ENCODE measurements at regions of chr19 and their contacts with region 1.

Region 1: GRCh38 chr19:18007044-18007916 is 690 bp upstream of the ARRDC2 start:
- DNase-seq: peak; percentile 63 to 80
- H3K4me3 ChIP-seq: peak overlapping the region; percentile 29
- H3K27ac ChIP-seq: no peak overlapping the region
- H3K4me1 ChIP-seq: peaks cover 9% of the 10 kb centered on the region; the same call in 1 of the 2 replicates
- H3K27me3 ChIP-seq: no peaks in the 10 kb centered on the region
- CTCF ChIP-seq: peak; percentile 98

Region 2: DNA sequence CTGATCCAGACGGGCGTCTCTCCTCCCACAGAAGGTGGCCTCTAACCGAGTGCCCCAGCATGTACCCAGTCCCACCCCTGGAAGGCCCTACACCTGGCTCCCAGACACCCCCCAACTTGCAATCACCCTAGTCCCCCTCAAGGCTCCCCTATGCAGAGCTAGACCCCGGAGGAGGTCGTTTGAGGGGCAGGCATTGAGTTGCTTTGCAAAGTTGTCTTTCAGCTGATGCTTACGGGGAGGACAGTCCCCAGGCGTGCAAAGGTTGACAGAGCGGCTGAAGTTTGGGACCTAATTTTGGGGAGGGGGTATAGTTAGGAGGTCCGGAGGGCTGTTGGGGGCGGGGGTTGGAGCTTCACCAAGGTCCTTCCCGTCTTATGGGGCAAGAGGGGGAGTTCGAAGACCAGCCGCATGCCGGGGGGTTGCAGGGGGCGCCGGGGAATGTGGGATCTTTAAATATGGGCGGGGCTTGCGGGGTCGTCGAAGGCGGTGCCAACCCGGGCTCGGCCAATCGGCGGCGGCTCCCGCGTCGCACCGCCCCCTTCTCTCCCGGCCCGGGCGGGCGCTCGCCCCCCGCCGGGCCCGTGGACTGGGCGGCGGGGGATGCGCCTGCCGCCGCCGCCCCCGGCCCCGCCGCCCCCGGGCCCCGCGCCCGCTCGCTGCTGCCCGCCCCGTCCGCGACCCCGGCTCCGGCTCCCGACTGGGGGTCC is 40.6 kb before region 1 on chr19 and contains the start of gene KCNN1:
- CTCF ChIA-PET with region 1: no interaction called
- POLR2A ChIA-PET with region 1: no interaction called
- intact Hi-C with region 1: no loop called
- DNase-seq: no peak
- H3K4me3 ChIP-seq: no peak within 1 kb of the TSS
- H3K27ac ChIP-seq: no peak within 1 kb of the TSS
- H3K4me1 ChIP-seq: no peaks in the 10 kb centered on the region
- H3K27me3 ChIP-seq: peaks cover 16% of the 10 kb centered on the region; the same call in 1 of the 2 replicates
- CTCF ChIP-seq: no peak
- total RNA-seq, gene KCNN1: 0.09 TPM in 1 of 2 replicates, not detected in the other

Region 3: GRCh38 chr19:18029617-18030338 is 22.5 kb after region 1 on chr19:
- CTCF ChIA-PET with region 1: no interaction called
- POLR2A ChIA-PET with region 1: no interaction called
- intact Hi-C with region 1: no loop called
- DNase-seq: peak; percentile 60 to 97
- H3K4me3 ChIP-seq: no peak overlapping the region
- H3K27ac ChIP-seq: peak overlapping the region; percentile 80
- H3K4me1 ChIP-seq: peaks cover 15% of the 10 kb centered on the region
- H3K27me3 ChIP-seq: no peaks in the 10 kb centered on the region
- CTCF ChIP-seq: no peak

Region 4: DNA sequence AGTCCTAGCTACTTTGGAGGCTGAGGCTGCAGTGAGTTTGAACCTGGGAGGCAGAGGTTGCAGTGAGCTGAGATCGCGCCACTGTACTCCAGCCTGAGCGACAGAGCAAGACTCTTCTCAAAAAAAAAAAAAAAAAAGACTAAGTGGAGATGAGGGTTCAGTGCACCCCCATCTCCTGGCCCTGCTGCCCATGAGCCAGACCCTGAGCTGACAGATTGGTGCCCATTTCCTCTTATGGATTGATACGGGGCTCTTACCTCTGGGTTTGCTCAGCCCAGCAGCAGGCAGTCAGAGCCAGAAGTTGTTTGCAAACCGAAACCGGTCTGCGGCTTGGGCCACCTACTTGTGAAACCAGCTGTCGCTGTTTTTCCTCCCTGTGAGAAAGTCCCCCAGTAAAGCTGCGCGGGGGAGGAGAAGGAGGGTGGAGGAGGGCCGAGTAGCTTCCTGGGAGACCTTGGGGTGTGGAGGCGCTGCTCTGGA is 37.6 kb after region 1 on chr19:
- CTCF ChIA-PET with region 1: interaction called, 12 read pairs
- POLR2A ChIA-PET with region 1: no interaction called
- intact Hi-C with region 1: no loop called
- DNase-seq: peak; percentile 54 to 60
- H3K4me3 ChIP-seq: no peak overlapping the region
- H3K27ac ChIP-seq: peak overlapping the region; percentile 54
- H3K4me1 ChIP-seq: peaks cover 14% of the 10 kb centered on the region
- H3K27me3 ChIP-seq: no peaks in the 10 kb centered on the region
- CTCF ChIP-seq: no peak

Region 5: DNA sequence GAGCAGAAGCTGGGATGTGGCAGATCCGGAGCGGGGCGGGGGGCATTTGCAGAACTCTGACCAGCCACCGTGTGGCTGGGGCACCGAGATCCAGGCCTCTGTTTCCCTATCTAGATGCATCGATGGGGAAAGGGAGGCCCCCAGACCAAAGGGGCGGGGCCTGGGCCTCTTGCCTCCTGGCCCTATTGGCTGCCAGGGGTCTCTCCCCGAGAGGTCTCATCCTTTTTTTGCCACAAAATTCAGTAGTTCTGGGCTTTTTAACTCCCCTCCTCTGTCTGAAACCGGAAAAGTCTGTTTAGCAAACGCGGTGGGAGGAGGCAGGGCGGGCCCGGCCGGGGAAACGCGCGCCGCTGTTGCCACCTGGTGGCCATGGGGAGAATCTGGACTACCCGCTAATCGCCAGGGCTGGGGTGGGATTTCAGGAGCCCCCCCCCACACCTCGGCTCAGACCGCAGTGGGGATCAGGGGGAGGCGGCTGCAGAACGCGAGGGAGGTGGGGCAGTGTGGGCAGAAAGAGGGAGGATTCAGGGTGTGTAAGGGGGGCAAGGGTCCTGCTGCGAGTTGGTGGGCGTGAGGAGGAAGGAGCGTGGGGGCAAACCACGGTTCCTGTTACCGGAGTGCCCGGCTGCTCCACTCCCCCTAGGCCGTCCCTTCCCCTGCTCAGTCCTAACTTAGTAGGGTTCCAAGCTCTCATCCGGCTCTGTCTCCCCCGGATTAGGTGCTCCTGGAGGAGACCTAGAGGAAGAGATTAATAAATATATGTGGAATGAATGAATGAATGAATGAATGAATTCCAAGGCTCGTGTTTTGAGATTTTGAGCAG is 51.1 kb after region 1 on chr19:
- CTCF ChIA-PET with region 1: interaction called, 11 read pairs
- POLR2A ChIA-PET with region 1: no interaction called
- intact Hi-C with region 1: loop called (anchors 1 kb)
- DNase-seq: peak; percentile 55 to 77
- H3K4me3 ChIP-seq: no peak overlapping the region
- H3K27ac ChIP-seq: no peak overlapping the region
- H3K4me1 ChIP-seq: no peaks in the 10 kb centered on the region; the same call in 1 of the 2 replicates
- H3K27me3 ChIP-seq: no peaks in the 10 kb centered on the region
- CTCF ChIP-seq: peak; percentile 99

Region 6: DNA sequence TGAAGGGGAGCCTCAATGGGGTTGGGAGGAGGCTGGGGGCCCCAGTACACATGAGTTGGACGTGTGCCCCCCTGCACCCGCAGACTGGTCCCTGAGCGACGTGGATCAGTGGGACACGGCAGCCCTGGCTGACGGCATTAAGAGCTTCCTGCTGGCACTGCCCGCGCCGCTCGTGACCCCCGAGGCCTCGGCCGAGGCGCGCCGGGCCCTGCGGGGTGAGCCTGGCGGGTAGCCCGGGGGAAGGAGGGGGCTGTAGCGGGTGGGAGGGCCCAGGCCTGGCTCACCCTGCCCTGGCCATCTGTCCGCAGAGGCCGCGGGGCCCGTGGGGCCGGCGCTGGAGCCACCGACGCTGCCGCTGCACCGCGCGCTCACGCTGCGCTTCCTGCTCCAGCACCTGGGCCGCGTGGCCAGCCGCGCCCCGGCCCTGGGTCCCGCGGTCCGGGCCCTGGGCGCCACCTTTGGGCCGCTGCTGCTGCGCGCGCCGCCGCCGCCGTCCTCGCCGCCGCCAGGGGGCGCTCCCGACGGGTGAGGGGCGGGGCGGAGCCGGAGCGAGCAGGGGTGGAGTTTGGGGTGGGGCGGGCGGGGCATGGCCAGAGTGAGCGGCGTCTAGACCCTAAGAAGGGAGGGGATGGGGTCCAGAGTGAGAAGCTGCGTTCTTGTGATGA is 153.8 kb after region 1 on chr19:
- CTCF ChIA-PET with region 1: no interaction called
- POLR2A ChIA-PET with region 1: interaction called, 4 read pairs
- intact Hi-C with region 1: loop called (anchors 5 kb)
- DNase-seq: peak in 1 of 2 experiments; percentile 79
- H3K4me3 ChIP-seq: no peak overlapping the region
- H3K27ac ChIP-seq: no peak overlapping the region
- H3K4me1 ChIP-seq: peaks cover 4% of the 10 kb centered on the region; the same call in 1 of the 2 replicates
- H3K27me3 ChIP-seq: no peaks in the 10 kb centered on the region
- CTCF ChIP-seq: peak; percentile 25; the same call in 1 of the 2 replicates

Region 7: DNA sequence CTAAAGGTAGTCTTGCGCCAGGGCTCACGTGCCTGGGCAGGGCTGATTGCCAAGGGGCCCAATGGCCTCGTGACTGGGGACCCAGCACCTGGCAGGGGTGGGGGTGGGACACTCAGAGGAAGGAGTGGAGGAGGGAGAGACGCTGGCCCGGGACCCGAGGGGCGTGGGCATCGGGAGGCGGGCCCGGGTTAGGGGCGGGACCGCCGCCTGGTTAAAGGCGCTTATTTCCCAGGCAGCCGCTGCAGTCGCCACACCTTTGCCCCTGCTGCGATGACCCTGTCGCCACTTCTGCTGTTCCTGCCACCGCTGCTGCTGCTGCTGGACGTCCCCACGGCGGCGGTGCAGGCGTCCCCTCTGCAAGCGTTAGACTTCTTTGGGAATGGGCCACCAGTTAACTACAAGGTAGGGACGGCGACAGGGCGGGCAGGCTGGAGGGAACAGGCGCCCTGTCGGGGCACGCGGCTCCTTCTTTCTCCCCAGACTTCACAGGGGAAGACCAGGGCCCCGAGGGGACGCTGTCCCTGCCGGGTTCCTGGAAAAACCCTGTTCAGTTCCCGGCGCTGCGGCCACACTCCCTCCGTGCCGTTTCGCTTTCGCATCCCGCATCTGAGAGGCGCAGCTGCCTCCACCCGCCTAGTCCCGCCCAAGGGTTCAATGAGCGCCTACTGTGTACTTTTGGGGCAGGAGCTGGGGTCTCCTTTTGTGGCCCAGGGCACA is 166.4 kb after region 1 on chr19 and contains the start of gene IFI30:
- CTCF ChIA-PET with region 1: no interaction called
- POLR2A ChIA-PET with region 1: no interaction called
- intact Hi-C with region 1: loop called (anchors 5 kb)
- DNase-seq: peak; percentile 63 to 84
- H3K4me3 ChIP-seq: peak within 1 kb of the TSS; percentile 66
- H3K27ac ChIP-seq: peak within 1 kb of the TSS; percentile 11; the same call in 1 of the 2 replicates
- H3K4me1 ChIP-seq: peaks cover 15% of the 10 kb centered on the region
- H3K27me3 ChIP-seq: no peaks in the 10 kb centered on the region
- CTCF ChIP-seq: no peak
- total RNA-seq, gene IFI30: 26.1 and 35.8 TPM in 2 replicates

Region 8: DNA sequence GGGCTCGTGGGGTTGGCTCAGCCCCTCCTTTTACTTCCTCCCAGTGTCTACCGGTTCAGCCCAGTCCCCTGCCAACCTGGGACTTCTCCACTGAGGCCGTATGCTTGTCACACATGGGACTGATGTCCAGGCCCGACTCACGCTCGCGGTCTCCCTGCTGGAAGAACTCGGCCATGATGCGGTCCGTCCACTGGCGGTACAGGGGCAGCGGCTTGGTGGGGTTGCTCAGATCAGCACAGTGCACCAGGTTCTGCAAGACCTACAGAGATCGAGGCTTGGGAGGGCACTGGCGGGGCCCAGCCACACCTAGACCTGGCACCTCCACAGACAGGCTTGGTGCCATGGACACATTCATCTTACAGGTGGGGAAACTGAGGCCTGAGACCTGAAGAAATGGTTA is 204.4 kb after region 1 on chr19:
- CTCF ChIA-PET with region 1: no interaction called
- POLR2A ChIA-PET with region 1: interaction called, 10 read pairs
- intact Hi-C with region 1: no loop called
- DNase-seq: no peak
- H3K4me3 ChIP-seq: no peak overlapping the region
- H3K27ac ChIP-seq: no peak overlapping the region
- H3K4me1 ChIP-seq: peaks cover 12% of the 10 kb centered on the region
- H3K27me3 ChIP-seq: no peaks in the 10 kb centered on the region
- CTCF ChIP-seq: no peak

Region 9: DNA sequence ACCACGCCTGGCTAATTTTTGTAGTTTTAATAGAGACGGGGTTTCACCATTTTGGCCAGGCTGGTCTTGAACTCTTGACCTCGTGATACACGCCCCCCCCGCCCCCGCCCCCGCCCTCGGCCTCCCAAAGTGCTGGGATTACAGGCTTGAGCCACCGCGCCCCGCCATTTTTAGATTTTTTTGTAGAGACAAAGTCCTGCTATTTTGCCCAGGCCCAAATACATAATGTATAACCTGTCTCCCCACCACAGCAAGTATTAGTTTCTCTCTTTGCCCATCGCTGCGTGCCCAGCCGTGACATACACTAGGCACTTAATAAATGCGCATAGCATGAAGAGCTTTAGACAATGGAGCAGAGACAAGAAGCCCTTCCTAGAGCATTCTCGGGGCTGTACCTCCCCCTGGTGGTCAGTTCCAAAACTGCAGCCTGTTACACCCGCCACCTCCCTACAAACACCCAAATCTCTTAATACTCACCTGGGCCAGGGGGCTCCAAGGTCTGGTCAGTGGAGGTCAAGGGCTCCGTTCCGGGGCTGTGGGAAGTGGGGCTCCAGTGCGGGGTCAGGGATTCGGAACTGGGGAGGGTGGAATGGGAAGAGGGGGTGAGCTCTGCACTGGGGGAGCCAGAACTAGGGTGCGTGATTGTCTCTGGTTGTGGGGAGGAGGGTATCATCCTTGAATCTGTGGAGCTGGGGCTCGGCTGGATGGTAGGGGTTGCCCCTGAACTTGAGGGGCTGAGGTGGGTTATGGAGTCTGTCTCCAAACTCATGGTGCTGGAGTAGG is 244.5 kb after region 1 on chr19:
- CTCF ChIA-PET with region 1: no interaction called
- POLR2A ChIA-PET with region 1: no interaction called
- intact Hi-C with region 1: loop called (anchors 1 kb)
- DNase-seq: peak; percentile 64 to 70
- H3K4me3 ChIP-seq: no peak overlapping the region
- H3K27ac ChIP-seq: no peak overlapping the region
- H3K4me1 ChIP-seq: peaks cover 39% of the 10 kb centered on the region
- H3K27me3 ChIP-seq: no peaks in the 10 kb centered on the region
- CTCF ChIP-seq: peak; percentile 100

Measured in PC-9 (cell line).